Naive thymus-derived CD4-positive, alpha-beta T cell (primary cell): ENCODE measurements at regions of chr17 and their contacts with region 1.

Region 1: DNA sequence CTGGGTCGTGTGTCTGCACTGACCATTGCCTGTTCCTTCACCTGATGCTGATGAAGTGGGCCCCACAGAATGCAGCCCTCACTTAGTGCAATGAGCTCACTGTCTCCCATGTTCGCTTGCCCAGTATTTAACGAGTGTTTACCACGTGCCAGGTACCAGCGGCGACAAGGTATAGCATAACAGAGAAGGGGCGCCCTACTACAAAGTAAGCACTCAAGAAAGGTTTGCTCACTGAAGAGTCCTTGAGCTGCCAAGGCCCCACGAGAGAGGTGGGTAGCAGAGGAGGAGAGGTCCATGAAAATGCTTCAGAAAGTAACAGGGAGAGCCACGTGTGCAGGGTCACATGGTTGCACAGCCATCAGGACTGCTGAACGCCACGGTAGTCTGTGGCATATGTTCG is 230.0 kb downstream of the NTN1 start:
- DNase-seq: no peak
- ATAC-seq: no peak
- H3K4me3 ChIP-seq: no peak overlapping the region
- H3K4me3 Mint-ChIP-seq: no peak overlapping the region
- H3K27ac ChIP-seq: no peak overlapping the region
- H3K27ac Mint-ChIP-seq: peak overlapping the region in 3 of 9 donors; percentile 28 to 53 (median 32)
- H3K4me1 ChIP-seq: peaks cover 0 to 10% of the 10 kb centered on the region in 2 donors
- H3K4me1 Mint-ChIP-seq: peaks cover 14 to 32% (median 19%) of the 10 kb centered on the region in 7 donors
- H3K27me3 ChIP-seq: no peaks in the 10 kb centered on the region
- H3K27me3 Mint-ChIP-seq: no peaks in the 10 kb centered on the region

Region 2: GRCh38 chr17:9291912-9292560 is 40.8 kb after region 1 on chr17:
- CTCF ChIA-PET with region 1: no interaction called
- POLR2A ChIA-PET with region 1: no interaction called
- intact Hi-C with region 1: loop called in 1 of 2 experiments (anchors 5 kb)
- DNase-seq: peak in 7 of 9 donors; percentile 12 to 40 (median 34)
- ATAC-seq: peak; percentile 74
- H3K4me3 ChIP-seq: no peak overlapping the region
- H3K4me3 Mint-ChIP-seq: peak overlapping the region in 1 of 10 donors; percentile 17
- H3K27ac ChIP-seq: no peak overlapping the region
- H3K27ac Mint-ChIP-seq: peak overlapping the region in 2 of 9 donors; percentile 50 to 74
- H3K4me1 ChIP-seq: peaks cover 7 to 10% of the 10 kb centered on the region in 2 donors
- H3K4me1 Mint-ChIP-seq: peaks cover 11 to 48% (median 30%) of the 10 kb centered on the region in 7 donors
- H3K27me3 ChIP-seq: no peaks in the 10 kb centered on the region
- H3K27me3 Mint-ChIP-seq: no peaks in the 10 kb centered on the region

Region 3: GRCh38 chr17:9484789-9485188 is 233.5 kb after region 1 on chr17:
- CTCF ChIA-PET with region 1: no interaction called
- POLR2A ChIA-PET with region 1: no interaction called
- intact Hi-C with region 1: no loop called
- DNase-seq: no peak
- ATAC-seq: no peak
- H3K4me3 ChIP-seq: no peak overlapping the region
- H3K4me3 Mint-ChIP-seq: no peak overlapping the region
- H3K27ac ChIP-seq: no peak overlapping the region
- H3K27ac Mint-ChIP-seq: peak overlapping the region in 1 of 9 donors; percentile 28
- H3K4me1 ChIP-seq: no peaks in the 10 kb centered on the region
- H3K4me1 Mint-ChIP-seq: peaks cover 0 to 5% (median 0%) of the 10 kb centered on the region in 7 donors
- H3K27me3 ChIP-seq: no peaks in the 10 kb centered on the region
- H3K27me3 Mint-ChIP-seq: no peaks in the 10 kb centered on the region